ENCODE measurements at regions of chr2 and their contacts with region 1.

Region 1: DNA sequence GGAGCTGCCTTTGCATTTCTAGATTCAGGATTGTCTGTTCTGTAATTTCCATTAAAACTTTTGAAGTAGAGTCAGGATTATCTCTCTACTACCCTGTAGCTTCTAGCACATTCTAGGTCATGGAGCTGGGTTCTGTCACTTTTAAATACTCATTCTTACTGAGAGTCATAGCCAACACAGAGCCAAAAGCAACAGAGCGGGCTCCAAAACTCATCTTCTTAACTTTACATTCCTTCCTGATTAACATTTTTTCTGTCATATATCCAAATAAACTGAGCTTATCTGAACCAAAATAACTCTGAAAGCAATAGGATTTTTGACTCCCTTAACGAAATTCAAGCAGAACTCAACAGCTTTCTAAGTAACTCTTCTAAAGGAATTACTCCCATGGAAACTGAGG is 12.9 kb downstream of the PREPL start:
- DNase-seq: no peak
- ATAC-seq: no peak
- H3K4me3 ChIP-seq: no peak overlapping the region
- H3K27ac ChIP-seq: no peak overlapping the region
- H3K4me1 ChIP-seq: no peaks in the 10 kb centered on the region
- H3K27me3 ChIP-seq: no peaks in the 10 kb centered on the region
- CTCF ChIP-seq: no peak
- POLR2A ChIP-seq: no peak
- RAD21 ChIP-seq: no peak

Region 2: DNA sequence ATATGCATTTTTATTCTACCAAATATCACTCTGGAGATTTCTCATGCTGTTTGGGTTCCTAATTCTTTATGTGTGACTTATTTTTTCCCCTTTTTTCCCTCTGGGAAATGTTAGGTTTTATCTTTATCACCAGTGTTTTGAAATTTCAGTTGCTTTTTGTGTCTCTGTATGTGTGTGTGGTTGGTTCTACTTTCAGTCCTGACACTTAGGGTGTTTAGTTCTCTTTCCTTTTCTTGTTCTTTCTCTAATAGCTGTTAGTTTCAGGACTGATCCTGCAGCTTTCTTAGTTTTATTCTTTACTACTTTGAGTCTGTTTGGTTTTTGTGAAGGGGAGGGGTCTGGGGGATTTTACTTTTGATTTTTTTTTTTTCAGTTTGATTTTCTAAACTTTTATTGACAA is 156.7 kb before region 1 on chr2:
- CTCF ChIA-PET with region 1: no interaction called
- POLR2A ChIA-PET with region 1: no interaction called
- RAD21 ChIA-PET with region 1: no interaction called
- intact Hi-C with region 1: no loop called
- DNase-seq: no peak
- ATAC-seq: no peak
- H3K4me3 ChIP-seq: no peak overlapping the region
- H3K27ac ChIP-seq: no peak overlapping the region
- H3K4me1 ChIP-seq: no peaks in the 10 kb centered on the region
- H3K27me3 ChIP-seq: no peaks in the 10 kb centered on the region
- CTCF ChIP-seq: no peak
- POLR2A ChIP-seq: no peak
- RAD21 ChIP-seq: no peak

Region 3: GRCh38 chr2:44361330-44362206 is 13.2 kb after region 1 on chr2 and contains the starts of genes CAMKMT and PREPL:
- CTCF ChIA-PET with region 1: no interaction called
- POLR2A ChIA-PET with region 1: interaction called, 14 read pairs
- RAD21 ChIA-PET with region 1: no interaction called
- intact Hi-C with region 1: no loop called
- DNase-seq: peak; percentile 96
- ATAC-seq: peak; percentile 86
- H3K4me3 ChIP-seq: peak within 1 kb of the TSS; percentile 84 to 93
- H3K27ac ChIP-seq: peak within 1 kb of the TSS; percentile 71
- H3K4me1 ChIP-seq: peaks cover 0 to 15% of the 10 kb centered on the region in 2 experiments; a peak in 2 of 4 replicates
- H3K27me3 ChIP-seq: no peaks in the 10 kb centered on the region
- CTCF ChIP-seq: no peak
- POLR2A ChIP-seq: peak; percentile 87
- RAD21 ChIP-seq: no peak
- total RNA-seq, gene CAMKMT: 10.6 TPM
- total RNA-seq, gene PREPL: 31.1 TPM